GM12878 (cell line): ENCODE measurements at regions of chr7 and their contacts with region 1.

Region 1: GRCh38 chr7:37833107-37833817 is 15.1 kb upstream of the NME8 start:
- DNase-seq: no peak
- ATAC-seq: peak; percentile 76
- H3K4me3 ChIP-seq: peak overlapping the region; percentile 57; the same call in 1 of the 2 replicates
- H3K27ac ChIP-seq: peak overlapping the region; percentile 26; the same call in 1 of the 2 replicates
- H3K4me1 ChIP-seq: peaks cover 4% of the 10 kb centered on the region; the same call in 1 of the 2 replicates
- H3K27me3 ChIP-seq: no peaks in the 10 kb centered on the region
- CTCF ChIP-seq: peak; percentile 59 to 67 (median 62); a peak in 5 of 6 replicates
- EP300 ChIP-seq: no peak
- POLR2A ChIP-seq: no peak
- RAD21 ChIP-seq: peak; percentile 93

Region 2: DNA sequence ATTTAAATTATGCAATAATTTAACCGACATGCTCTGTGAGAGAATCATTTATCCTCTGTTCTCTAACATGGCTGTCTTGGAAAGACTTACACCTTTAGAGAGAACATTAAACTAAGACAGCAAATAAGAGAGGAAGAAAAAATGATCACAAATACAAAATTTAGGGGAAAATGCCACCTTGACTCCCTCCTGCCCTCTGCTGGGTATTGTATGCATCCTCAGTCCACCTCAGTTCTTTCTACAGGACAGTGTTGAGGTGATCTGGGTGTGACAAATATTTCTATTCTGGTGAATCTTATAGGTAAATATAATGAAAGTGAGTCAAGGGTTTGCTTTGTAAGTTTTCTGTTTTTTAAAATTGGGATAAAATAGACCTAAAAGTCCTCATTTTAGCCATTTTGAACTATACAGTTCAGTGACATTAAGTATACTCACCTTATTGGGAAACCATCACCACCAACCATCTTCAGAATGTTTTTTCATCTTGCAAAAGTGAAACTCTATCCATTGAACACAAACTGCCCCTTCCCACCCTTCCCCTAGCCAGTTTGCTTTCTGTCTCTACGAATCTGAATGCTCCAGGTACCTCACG is 323.1 kb before region 1 on chr7:
- CTCF ChIA-PET with region 1: interaction called, 4 read pairs
- POLR2A ChIA-PET with region 1: no interaction called
- RAD21 ChIA-PET with region 1: interaction called, 5 read pairs
- SMC1A ChIA-PET with region 1: interaction called, 8 read pairs
- in situ Hi-C with region 1: no loop called
- intact Hi-C with region 1: loop called (anchors 2 kb)
- DNase-seq: no peak
- ATAC-seq: peak; percentile 80
- H3K4me3 ChIP-seq: no peak overlapping the region
- H3K27ac ChIP-seq: no peak overlapping the region
- H3K4me1 ChIP-seq: no peaks in the 10 kb centered on the region
- H3K27me3 ChIP-seq: peaks cover 0 to 4% of the 10 kb centered on the region in 2 experiments; a peak in 2 of 4 replicates
- CTCF ChIP-seq: peak; percentile 59 to 77 (median 76)
- EP300 ChIP-seq: no peak
- POLR2A ChIP-seq: no peak
- RAD21 ChIP-seq: peak; percentile 71

Region 3: DNA sequence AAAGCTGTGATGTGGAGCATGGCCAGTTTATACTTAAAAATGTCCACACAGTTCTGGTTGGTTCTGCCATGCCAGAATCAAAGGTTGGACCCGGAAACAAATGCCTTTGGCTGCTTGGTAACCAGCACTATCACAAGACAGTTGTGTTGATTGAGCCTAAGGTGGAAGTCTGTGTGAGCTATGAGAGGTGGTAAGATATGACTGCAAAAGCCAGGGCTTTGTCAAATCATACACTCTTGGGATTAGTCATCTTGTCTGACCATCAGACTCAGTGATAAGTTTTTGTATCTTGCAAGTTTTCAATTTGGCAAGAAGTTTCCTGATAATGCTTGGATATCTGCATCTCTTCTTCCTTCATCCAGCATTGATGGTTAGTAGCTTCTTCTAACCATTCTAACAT is 114.2 kb before region 1 on chr7:
- CTCF ChIA-PET with region 1: interaction called, 11 read pairs
- POLR2A ChIA-PET with region 1: no interaction called
- RAD21 ChIA-PET with region 1: interaction called, 4 read pairs
- SMC1A ChIA-PET with region 1: interaction called, 5 read pairs
- in situ Hi-C with region 1: no loop called
- intact Hi-C with region 1: no loop called
- DNase-seq: no peak
- ATAC-seq: peak; percentile 95
- H3K4me3 ChIP-seq: no peak overlapping the region
- H3K27ac ChIP-seq: no peak overlapping the region
- H3K4me1 ChIP-seq: peaks cover 8% of the 10 kb centered on the region
- H3K27me3 ChIP-seq: no peaks in the 10 kb centered on the region
- CTCF ChIP-seq: no peak
- EP300 ChIP-seq: peak; percentile 21 to 59; a peak in 1 of 4 replicates
- POLR2A ChIP-seq: no peak
- RAD21 ChIP-seq: no peak

Region 4: DNA sequence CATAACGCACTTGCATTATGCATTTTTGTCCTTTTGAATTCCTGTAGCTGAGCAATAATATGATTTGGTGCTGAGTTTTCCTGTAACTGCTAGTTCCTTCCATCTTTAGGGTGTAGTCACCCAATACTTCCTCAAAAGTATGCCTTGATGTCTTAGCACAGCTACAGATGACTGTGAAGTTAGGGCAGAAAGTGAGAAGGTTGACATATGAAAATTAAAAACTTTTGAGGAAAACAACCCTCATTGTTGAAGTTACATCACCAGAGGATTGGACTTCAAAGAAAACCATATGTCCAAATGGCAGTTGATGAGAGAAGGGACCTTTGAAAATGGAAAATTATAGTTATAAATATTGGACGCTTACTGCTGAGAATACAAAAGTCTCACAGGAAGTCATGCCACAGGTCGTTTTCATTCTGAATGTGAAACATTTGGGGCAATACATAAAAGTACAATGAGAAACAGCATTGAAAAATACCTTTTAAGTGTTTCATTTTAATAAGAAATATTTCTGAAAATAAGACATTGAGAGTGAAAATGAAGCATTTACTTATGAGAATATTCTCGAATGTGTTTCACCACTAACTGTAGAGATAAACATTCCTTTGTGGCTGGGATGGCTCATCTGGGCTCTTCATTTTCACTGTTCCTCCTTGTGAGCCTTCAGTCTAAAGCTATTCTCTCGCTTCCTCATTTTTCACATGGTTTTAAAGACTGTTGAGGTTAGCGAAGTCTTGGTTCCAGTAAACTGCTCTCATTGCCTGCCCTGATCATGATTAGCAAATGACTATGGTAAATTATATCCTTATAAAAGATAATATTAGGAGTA is 46.3 kb before region 1 on chr7:
- CTCF ChIA-PET with region 1: interaction called, 26 read pairs
- POLR2A ChIA-PET with region 1: no interaction called
- RAD21 ChIA-PET with region 1: interaction called, 6 read pairs
- SMC1A ChIA-PET with region 1: interaction called, 16 read pairs
- in situ Hi-C with region 1: no loop called
- intact Hi-C with region 1: loop called (anchors 1 kb)
- DNase-seq: peak; percentile 91
- ATAC-seq: peak; percentile 92
- H3K4me3 ChIP-seq: peak overlapping the region; percentile 25; the same call in 1 of the 2 replicates
- H3K27ac ChIP-seq: peak overlapping the region; percentile 86
- H3K4me1 ChIP-seq: peaks cover 50% of the 10 kb centered on the region
- H3K27me3 ChIP-seq: no peaks in the 10 kb centered on the region
- CTCF ChIP-seq: no peak
- EP300 ChIP-seq: peak; percentile 83 to 89; a peak in 3 of 4 replicates
- POLR2A ChIP-seq: no peak
- RAD21 ChIP-seq: no peak

Region 5: GRCh38 chr7:37820708-37821468 is 12.4 kb before region 1 on chr7:
- CTCF ChIA-PET with region 1: interaction called, 71 read pairs
- POLR2A ChIA-PET with region 1: interaction called, 4 read pairs
- RAD21 ChIA-PET with region 1: interaction called, 76 read pairs
- SMC1A ChIA-PET with region 1: interaction called, 115 read pairs
- in situ Hi-C with region 1: no loop called
- intact Hi-C with region 1: no loop called
- DNase-seq: no peak
- ATAC-seq: peak; percentile 59
- H3K4me3 ChIP-seq: 0 out of 2 replicates have a peak overlapping the region, but pooled peaks have one; percentile 45
- H3K27ac ChIP-seq: peak overlapping the region; percentile 80
- H3K4me1 ChIP-seq: peaks cover 26% of the 10 kb centered on the region
- H3K27me3 ChIP-seq: no peaks in the 10 kb centered on the region
- CTCF ChIP-seq: no peak
- EP300 ChIP-seq: no peak
- POLR2A ChIP-seq: no peak
- RAD21 ChIP-seq: no peak

Region 6: DNA sequence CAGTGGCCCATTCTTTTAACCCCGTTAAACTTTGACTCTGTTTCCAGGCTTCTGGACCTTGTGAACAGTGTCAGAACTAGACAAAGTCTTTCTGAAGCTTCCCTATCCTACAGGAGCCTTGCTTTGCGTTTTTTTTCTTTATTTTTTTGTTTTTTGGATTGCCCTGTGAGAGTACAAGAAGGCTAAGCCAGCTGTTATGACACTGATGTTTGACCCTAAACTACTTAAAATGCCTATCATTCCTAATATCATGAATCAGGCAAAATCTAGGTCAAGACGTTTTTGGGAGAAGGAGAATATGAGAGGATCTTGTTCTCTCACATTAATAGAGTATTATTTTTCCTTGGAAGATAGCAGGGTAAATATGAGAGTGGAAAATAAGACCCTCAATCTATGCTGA is 167.0 kb after region 1 on chr7:
- CTCF ChIA-PET with region 1: no interaction called
- POLR2A ChIA-PET with region 1: no interaction called
- RAD21 ChIA-PET with region 1: no interaction called
- SMC1A ChIA-PET with region 1: no interaction called
- in situ Hi-C with region 1: no loop called
- intact Hi-C with region 1: no loop called
- DNase-seq: no peak
- ATAC-seq: no peak
- H3K4me3 ChIP-seq: no peak overlapping the region
- H3K27ac ChIP-seq: no peak overlapping the region
- H3K4me1 ChIP-seq: no peaks in the 10 kb centered on the region
- H3K27me3 ChIP-seq: no peaks in the 10 kb centered on the region; a peak in 1 of 4 replicates
- CTCF ChIP-seq: no peak
- EP300 ChIP-seq: no peak
- POLR2A ChIP-seq: no peak
- RAD21 ChIP-seq: no peak